ENCODE measurements at regions of chr7 and their contacts with region 1.

Region 1: DNA sequence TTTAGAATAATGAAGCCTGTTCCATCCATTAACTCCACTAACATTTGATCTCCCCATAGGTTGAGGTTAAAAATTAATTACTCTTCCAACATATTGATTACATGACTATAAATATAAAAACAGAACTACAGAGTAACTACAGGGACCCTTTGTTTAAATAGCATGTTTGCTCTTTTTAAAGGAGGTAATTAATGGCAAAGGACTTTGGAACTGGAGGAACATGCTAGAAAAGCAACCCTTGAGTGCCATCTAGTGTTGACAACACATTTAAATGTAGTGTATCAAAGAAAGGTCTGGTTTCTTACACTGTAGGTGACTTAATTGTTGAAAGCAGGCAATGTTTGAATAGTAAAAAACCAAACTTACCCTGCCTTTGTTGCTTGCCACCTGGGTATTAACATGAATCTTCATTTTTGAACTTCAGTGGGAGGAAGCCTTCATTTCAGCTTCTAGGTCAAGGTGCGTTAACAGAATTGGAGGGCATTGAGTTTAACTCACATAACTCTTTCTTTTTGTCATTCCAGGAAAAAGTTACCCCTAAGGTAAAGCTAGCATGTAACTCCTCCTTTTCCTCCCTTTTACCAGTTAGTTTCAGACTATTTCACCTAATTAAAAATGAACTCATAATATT is 52.6 kb upstream of the CAPZA2 start:
- DNase-seq: no peak
- H3K4me3 ChIP-seq: no peak overlapping the region
- H3K27ac ChIP-seq: no peak overlapping the region
- H3K4me1 ChIP-seq: peaks cover 0 to 4% of the 10 kb centered on the region in 2 donors
- H3K27me3 ChIP-seq: no peaks in the 10 kb centered on the region
- CTCF ChIP-seq: peak; percentile 49 to 80 (median 70)
- POLR2A ChIP-seq: no peak

Region 2: GRCh38 chr7:116173051-116174028 is 636.4 kb before region 1 on chr7:
- intact Hi-C with region 1: loop called (anchors 10 kb)
- DNase-seq: no peak
- H3K4me3 ChIP-seq: no peak overlapping the region
- H3K27ac ChIP-seq: no peak overlapping the region
- H3K4me1 ChIP-seq: no peaks in the 10 kb centered on the region
- H3K27me3 ChIP-seq: no peaks in the 10 kb centered on the region
- CTCF ChIP-seq: peak; percentile 46 to 73 (median 58)
- POLR2A ChIP-seq: no peak

Region 3: DNA sequence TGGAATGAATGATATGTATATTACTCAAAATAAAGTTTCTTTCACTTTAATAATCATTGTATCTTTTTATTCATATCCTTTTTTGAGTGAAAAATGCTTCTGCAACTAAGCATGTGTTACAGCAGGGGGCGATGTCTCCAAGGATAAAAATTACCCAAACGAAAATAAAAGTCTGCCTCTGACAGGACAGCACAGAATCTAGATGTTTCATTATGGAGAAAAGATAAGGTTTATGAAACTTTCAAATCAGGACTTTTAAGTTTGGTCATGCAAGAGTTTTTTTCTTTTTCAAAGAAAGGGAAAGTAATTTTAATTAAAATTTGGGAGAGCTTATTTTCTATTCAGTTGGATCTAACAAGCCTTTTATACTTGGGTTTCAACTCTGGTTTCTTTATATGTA is 551.0 kb before region 1 on chr7:
- intact Hi-C with region 1: loop called (anchors 10 kb)
- DNase-seq: peak in 1 of 2 donors; percentile 33
- H3K4me3 ChIP-seq: no peak overlapping the region
- H3K27ac ChIP-seq: peak overlapping the region in 1 of 2 donors; percentile 52
- H3K4me1 ChIP-seq: no peaks in the 10 kb centered on the region
- H3K27me3 ChIP-seq: no peaks in the 10 kb centered on the region
- CTCF ChIP-seq: peak; percentile 73 to 93 (median 86)
- POLR2A ChIP-seq: no peak